Panc1 (cell line): ENCODE measurements at regions of chr2 and their contacts with region 1.

Region 1: DNA sequence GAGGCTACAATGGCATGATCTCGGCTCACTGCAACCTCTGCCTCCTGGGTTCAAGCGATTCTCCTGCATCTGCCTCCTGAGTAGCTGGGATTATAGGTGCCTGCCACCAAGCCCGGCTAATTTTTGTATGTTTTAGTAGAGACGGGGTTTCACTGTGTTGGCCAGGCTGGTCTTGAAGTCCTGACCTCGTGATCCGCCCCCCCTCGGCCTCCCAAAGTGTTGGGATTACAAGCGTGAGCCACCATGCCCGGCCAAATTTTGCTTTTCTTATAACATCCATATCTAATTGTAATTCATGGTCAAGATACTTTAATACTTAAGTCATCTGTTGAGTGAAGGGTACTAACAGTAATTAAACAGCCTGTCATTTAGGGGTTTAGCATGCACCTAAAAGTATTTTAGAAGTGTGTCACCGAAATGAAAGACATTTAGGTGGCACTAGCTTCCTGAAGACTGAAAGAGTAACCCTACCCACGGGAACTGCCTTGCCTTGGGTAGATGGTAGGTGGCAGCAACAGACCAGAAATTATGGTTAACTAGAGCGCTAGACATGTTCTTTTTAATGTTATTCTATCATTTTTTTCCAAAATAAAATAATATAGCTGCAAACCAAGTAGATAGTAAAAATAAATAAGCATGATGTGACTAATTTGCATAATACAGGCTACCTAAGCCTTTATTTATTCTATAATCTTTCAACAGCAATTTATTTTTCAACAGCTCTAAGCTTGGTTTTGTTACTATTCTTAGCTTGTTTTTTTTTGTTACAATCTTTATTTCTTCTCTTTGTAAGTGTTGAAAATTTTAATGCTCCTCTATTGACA is 8.6 kb upstream of the ACYP2 start:
- DNase-seq: no peak
- ATAC-seq: peak; percentile 94
- H3K4me3 ChIP-seq: no peak overlapping the region
- H3K27ac ChIP-seq: no peak overlapping the region
- H3K4me1 ChIP-seq: no peaks in the 10 kb centered on the region
- H3K27me3 ChIP-seq: no peaks in the 10 kb centered on the region
- CTCF ChIP-seq: peak; percentile 81

Region 2: GRCh38 chr2:53964257-53964952 is 142.4 kb before region 1 on chr2:
- CTCF ChIA-PET with region 1: no interaction called
- POLR2A ChIA-PET with region 1: no interaction called
- in situ Hi-C with region 1: no loop called
- intact Hi-C with region 1: no loop called
- DNase-seq: no peak
- ATAC-seq: no peak
- H3K4me3 ChIP-seq: no peak overlapping the region
- H3K27ac ChIP-seq: no peak overlapping the region
- H3K4me1 ChIP-seq: peaks cover 5% of the 10 kb centered on the region
- H3K27me3 ChIP-seq: no peaks in the 10 kb centered on the region
- CTCF ChIP-seq: no peak

Region 3: DNA sequence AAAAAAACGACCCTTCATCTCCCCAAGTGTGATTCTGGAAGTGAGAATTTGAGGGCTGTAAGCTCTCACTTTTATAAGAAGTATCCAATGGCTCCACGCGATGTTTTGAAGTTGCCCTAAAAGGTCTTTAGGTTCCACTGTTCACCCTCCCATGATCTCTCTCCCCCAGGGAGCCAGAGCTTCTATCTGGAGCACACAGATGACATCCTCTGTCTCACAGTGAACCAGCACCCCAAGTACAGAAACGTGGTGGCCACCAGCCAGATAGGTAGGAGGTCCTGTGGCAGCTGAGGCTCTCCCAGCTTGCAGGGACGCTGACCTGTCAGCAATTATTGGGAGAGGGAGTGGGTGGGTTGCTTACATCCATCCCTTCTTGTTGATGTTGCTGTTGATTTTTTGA is 845.6 kb after region 1 on chr2:
- CTCF ChIA-PET with region 1: interaction called, 12 read pairs
- POLR2A ChIA-PET with region 1: no interaction called
- in situ Hi-C with region 1: no loop called
- intact Hi-C with region 1: no loop called
- DNase-seq: no peak
- ATAC-seq: no peak
- H3K4me3 ChIP-seq: peak overlapping the region in 1 of 2 experiments; percentile 14; a peak in 1 of 4 replicates
- H3K27ac ChIP-seq: peak overlapping the region; percentile 96
- H3K4me1 ChIP-seq: peaks cover 57% of the 10 kb centered on the region
- H3K27me3 ChIP-seq: no peaks in the 10 kb centered on the region
- CTCF ChIP-seq: no peak